Mammary epithelial cell (primary cell): ENCODE measurements at regions of chrX and their contacts with region 1.

Region 1: GRCh38 chrX:20530406-20530921 is 263.8 kb upstream of the RPS6KA3 start:
- DNase-seq: peak; percentile 32
- H3K4me3 ChIP-seq: peak overlapping the region in 1 of 3 experiments; percentile 17
- H3K27ac ChIP-seq: no peak overlapping the region
- H3K4me1 ChIP-seq: no peaks in the 10 kb centered on the region
- H3K27me3 ChIP-seq: no peaks in the 10 kb centered on the region
- CTCF ChIP-seq: peak; percentile 76 to 79

Region 2: DNA sequence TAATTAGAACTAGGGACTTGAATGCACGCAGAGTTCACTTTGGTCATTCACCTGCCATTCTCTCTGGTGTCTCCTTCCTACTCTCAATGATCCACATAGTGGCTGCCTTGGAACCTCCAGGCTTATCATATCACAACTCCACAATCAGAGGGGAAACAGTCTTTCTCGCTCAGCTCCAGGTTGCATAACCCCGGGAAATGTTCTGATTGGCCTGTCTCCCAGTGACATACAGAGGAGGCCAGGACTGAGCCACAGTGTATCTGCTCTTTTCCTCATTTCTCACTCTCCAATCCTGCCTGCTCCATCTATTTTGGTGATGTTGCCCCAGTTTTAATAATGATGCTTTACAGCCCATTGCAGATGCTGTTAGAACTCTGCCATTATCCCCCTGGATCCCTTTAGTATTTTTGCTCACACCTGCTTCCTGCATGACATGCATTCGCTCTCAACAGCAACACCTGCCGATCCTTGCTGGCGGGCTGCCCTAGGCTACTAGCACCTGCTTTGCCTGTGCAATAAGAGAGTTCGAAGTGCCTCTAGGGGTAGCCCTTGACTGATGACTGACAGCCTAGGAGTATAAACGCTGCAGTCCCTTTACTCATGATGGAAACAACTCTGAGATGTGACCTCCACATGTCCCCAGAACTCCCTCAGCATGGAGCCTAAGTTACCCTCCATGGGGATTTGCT is 52.5 kb before region 1 on chrX:
- CTCF ChIA-PET with region 1: no interaction called
- dilution Hi-C with region 1: no loop called
- in situ Hi-C with region 1: no loop called
- intact Hi-C with region 1: no loop called
- DNase-seq: no peak
- H3K4me3 ChIP-seq: no peak overlapping the region
- H3K27ac ChIP-seq: no peak overlapping the region
- H3K4me1 ChIP-seq: no peaks in the 10 kb centered on the region
- H3K27me3 ChIP-seq: no peaks in the 10 kb centered on the region
- CTCF ChIP-seq: no peak

Region 3: GRCh38 chrX:20490093-20490492 is 40.4 kb before region 1 on chrX:
- CTCF ChIA-PET with region 1: no interaction called
- dilution Hi-C with region 1: no loop called
- in situ Hi-C with region 1: no loop called
- intact Hi-C with region 1: no loop called
- DNase-seq: no peak
- H3K4me3 ChIP-seq: no peak overlapping the region
- H3K27ac ChIP-seq: no peak overlapping the region
- H3K4me1 ChIP-seq: no peaks in the 10 kb centered on the region
- H3K27me3 ChIP-seq: no peaks in the 10 kb centered on the region
- CTCF ChIP-seq: no peak

Region 4: DNA sequence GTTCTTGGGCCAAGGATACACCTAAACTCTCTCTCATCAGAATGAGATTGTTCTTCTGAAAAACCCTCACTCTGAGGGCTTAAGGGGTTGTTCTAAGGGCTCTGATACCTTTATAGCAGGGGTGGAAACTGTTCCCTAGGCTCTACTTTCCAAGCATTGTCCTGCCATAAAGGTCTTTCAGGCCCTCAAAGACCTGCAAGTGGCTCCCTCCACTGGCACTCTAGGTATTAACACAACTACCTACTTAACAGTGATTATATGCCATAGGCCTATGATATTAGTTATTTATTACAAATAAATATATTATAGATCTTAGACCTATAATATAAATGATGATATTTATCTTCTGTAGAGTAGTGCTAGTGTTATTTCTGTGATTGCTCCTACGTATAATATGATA is 210.0 kb after region 1 on chrX:
- CTCF ChIA-PET with region 1: no interaction called
- dilution Hi-C with region 1: no loop called
- in situ Hi-C with region 1: no loop called
- intact Hi-C with region 1: loop called (anchors 2 kb)
- DNase-seq: no peak
- H3K4me3 ChIP-seq: no peak overlapping the region
- H3K27ac ChIP-seq: no peak overlapping the region
- H3K4me1 ChIP-seq: no peaks in the 10 kb centered on the region
- H3K27me3 ChIP-seq: no peaks in the 10 kb centered on the region
- CTCF ChIP-seq: no peak

Region 5: GRCh38 chrX:21374163-21374993 is 843.9 kb after region 1 on chrX and contains the start of gene CNKSR2:
- CTCF ChIA-PET with region 1: no interaction called
- dilution Hi-C with region 1: no loop called
- in situ Hi-C with region 1: no loop called
- intact Hi-C with region 1: loop called (anchors 10 kb)
- DNase-seq: peak; percentile 26
- H3K4me3 ChIP-seq: peak within 1 kb of the TSS; percentile 52 to 60 (median 58)
- H3K27ac ChIP-seq: no peak within 1 kb of the TSS
- H3K4me1 ChIP-seq: no peaks in the 10 kb centered on the region
- H3K27me3 ChIP-seq: no peaks in the 10 kb centered on the region
- CTCF ChIP-seq: no peak
- total RNA-seq, gene CNKSR2: 1.7 to 2.7 TPM

Region 6: GRCh38 chrX:21725496-21725895 is 1195.0 kb after region 1 on chrX:
- CTCF ChIA-PET with region 1: no interaction called
- dilution Hi-C with region 1: no loop called
- in situ Hi-C with region 1: loop called in 1 of 2 experiments (anchors 10 kb)
- intact Hi-C with region 1: loop called (anchors 1 kb)
- DNase-seq: peak; percentile 46
- H3K4me3 ChIP-seq: no peak overlapping the region
- H3K27ac ChIP-seq: no peak overlapping the region
- H3K4me1 ChIP-seq: no peaks in the 10 kb centered on the region
- H3K27me3 ChIP-seq: no peaks in the 10 kb centered on the region
- CTCF ChIP-seq: peak; percentile 48 to 63

Region 7: GRCh38 chrX:21972721-21973120 is 1442.3 kb after region 1 on chrX:
- CTCF ChIA-PET with region 1: no interaction called
- dilution Hi-C with region 1: no loop called
- in situ Hi-C with region 1: no loop called
- intact Hi-C with region 1: loop called (anchors 10 kb)
- DNase-seq: no peak
- H3K4me3 ChIP-seq: no peak overlapping the region
- H3K27ac ChIP-seq: no peak overlapping the region
- H3K4me1 ChIP-seq: peaks cover 7% of the 10 kb centered on the region
- H3K27me3 ChIP-seq: no peaks in the 10 kb centered on the region
- CTCF ChIP-seq: peak in 1 of 2 donors; percentile 12